ENCODE measurements at regions of chr21 and their contacts with region 1.

Region 1: GRCh38 chr21:34263629-34264028 is 100.2 kb upstream of the KCNE2 start:
- DNase-seq: no peak
- ATAC-seq: no peak
- H3K4me3 ChIP-seq: no peak overlapping the region
- H3K4me3 Mint-ChIP-seq: no peak overlapping the region
- H3K27ac ChIP-seq: no peak overlapping the region
- H3K27ac Mint-ChIP-seq: no peak overlapping the region
- H3K4me1 ChIP-seq: no peaks in the 10 kb centered on the region
- H3K4me1 Mint-ChIP-seq: no peaks in the 10 kb centered on the region
- H3K27me3 ChIP-seq: no peaks in the 10 kb centered on the region
- H3K27me3 Mint-ChIP-seq: peaks cover 0 to 4% of the 10 kb centered on the region in 2 donors
- CTCF ChIP-seq: no peak

Region 2: DNA sequence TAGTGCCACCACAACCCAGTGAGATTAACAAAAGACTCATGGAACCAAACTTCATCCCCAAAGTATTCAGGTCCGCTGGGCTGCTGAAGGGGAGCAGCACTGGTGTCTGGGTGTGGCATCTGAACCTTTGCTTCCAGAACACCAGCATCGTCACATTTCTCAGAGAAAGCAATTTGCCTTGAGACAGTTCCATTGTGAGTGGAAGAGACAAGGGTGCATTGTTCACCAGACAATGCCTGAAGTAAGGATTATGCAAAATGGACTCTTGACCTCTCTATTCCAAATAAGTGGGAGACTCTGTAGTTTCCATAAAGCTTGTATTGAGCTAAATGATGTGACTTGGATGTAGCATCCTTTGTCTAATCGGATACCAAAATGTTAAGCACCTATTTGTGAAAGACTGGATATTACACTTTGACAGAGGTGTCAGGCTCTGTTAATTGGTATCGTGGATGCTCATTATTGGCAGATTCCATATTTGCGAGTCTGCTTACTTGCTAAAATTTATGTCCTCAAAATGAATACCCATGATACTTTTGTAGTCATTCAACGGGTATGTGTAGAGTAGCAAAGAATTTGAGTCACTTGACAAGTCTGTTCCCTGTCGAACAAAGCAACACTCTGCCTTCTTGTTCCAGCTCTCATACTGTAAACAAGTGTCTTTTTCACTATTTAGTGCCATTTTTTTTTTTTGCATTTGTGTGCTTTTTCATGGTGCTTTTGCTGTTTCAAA is 114.6 kb before region 1 on chr21:
- intact Hi-C with region 1: no loop called
- DNase-seq: no peak
- ATAC-seq: no peak
- H3K4me3 ChIP-seq: no peak overlapping the region
- H3K4me3 Mint-ChIP-seq: no peak overlapping the region
- H3K27ac ChIP-seq: no peak overlapping the region
- H3K27ac Mint-ChIP-seq: no peak overlapping the region
- H3K4me1 ChIP-seq: no peaks in the 10 kb centered on the region
- H3K4me1 Mint-ChIP-seq: peaks cover 30 to 47% of the 10 kb centered on the region in 2 donors
- H3K27me3 ChIP-seq: no peaks in the 10 kb centered on the region
- H3K27me3 Mint-ChIP-seq: no peaks in the 10 kb centered on the region
- CTCF ChIP-seq: no peak

Region 3: GRCh38 chr21:34243562-34243961 is 20.1 kb before region 1 on chr21:
- intact Hi-C with region 1: loop called (anchors 1 kb)
- DNase-seq: peak in 1 of 2 donors; percentile 51
- ATAC-seq: no peak
- H3K4me3 ChIP-seq: no peak overlapping the region
- H3K4me3 Mint-ChIP-seq: no peak overlapping the region
- H3K27ac ChIP-seq: no peak overlapping the region
- H3K27ac Mint-ChIP-seq: no peak overlapping the region
- H3K4me1 ChIP-seq: no peaks in the 10 kb centered on the region
- H3K4me1 Mint-ChIP-seq: no peaks in the 10 kb centered on the region
- H3K27me3 ChIP-seq: no peaks in the 10 kb centered on the region
- H3K27me3 Mint-ChIP-seq: no peaks in the 10 kb centered on the region
- CTCF ChIP-seq: no peak